GM18951 (cell line): ENCODE measurements at regions of chr4 and their contacts with region 1.

Region 1: DNA sequence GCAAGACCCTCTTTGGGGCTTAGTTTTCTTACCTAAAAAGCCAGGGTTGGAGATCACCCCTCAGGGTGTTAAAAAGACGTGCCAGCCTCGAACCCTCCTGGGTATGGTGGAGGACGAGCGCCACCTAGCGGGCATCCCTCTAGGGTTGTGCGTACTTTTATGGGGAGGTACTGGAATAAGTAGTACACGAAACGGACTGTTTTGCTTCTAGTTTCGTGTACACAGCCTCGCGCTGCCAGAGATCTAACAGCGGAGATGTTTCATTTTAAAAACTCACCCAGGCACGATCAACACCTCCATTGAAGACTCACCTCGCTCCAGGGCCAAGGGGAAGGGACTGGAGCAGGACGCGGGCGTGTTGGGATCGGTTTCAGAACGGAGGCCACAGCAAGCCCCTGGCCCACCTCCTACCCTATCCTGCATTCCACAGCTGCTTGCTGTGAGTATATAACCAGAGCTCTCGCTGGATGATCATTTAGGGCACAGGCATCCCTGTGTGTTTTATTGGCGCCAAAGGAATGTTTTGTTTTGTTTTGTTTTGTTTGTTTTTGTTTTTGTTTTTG is 4.8 kb upstream of the NKX3-2 start:
- POLR2A ChIP-seq: no peak

Region 2: GRCh38 chr4:12852338-12853307 is 696.4 kb before region 1 on chr4:
- in situ Hi-C with region 1: loop called (anchors 10 kb)
- POLR2A ChIP-seq: no peak

Region 3: GRCh38 chr4:13313856-13314255 is 235.2 kb before region 1 on chr4:
- in situ Hi-C with region 1: no loop called
- POLR2A ChIP-seq: no peak

Region 4: GRCh38 chr4:13678186-13678924 is 129.3 kb after region 1 on chr4:
- in situ Hi-C with region 1: no loop called
- POLR2A ChIP-seq: no peak